ENCODE measurements at regions of chr6 and their contacts with region 1.

Region 1: GRCh38 chr6:73519926-73520687 is 725 bp downstream of the EEF1A1 start:
- DNase-seq: peak; percentile 42
- H3K4me3 ChIP-seq: peak overlapping the region; percentile 100
- CTCF ChIP-seq: no peak

Region 2: DNA sequence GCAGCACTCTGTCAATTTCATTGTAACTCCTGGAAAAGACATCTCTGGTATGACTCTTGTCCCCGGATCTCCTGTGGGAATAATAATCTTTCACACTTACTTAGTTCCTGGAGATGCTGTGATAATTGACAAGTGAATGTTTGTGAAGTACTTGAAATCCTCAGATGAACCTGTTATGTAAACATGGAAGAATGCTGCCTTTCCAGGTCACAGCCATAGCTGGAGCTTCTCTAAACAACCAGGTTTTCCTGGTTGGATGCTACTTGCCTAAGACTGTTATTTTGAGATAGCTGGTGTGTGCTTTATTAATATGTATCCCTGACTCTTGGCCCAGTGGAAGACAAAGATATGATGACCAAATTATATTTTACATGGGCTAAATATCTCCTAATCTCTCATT is 669.6 kb before region 1 on chr6:
- in situ Hi-C with region 1: no loop called
- DNase-seq: no peak
- H3K4me3 ChIP-seq: no peak overlapping the region
- CTCF ChIP-seq: no peak

Region 3: GRCh38 chr6:73566954-73567591 is 47.0 kb after region 1 on chr6:
- in situ Hi-C with region 1: loop called (anchors 5 kb)
- DNase-seq: no peak
- H3K4me3 ChIP-seq: no peak overlapping the region
- CTCF ChIP-seq: no peak

Region 4: DNA sequence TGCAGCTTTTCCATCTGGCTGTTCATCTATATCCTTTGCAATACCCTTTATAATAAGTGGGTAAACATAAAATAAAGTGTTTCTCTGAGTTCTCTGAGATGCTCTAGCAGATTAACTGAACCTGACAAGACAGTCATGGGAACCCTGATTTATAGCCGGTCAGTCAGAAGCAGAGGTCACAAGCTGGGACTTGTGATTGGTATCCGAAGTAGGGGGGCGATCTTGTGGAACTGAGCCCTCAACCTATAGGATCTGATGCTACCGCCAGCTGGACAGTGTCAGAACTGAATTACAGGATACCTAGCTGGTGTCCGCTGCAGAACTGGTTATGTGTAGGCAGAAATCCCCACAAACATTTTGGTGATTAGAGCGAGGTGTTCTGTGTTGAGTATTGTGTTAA is 94.7 kb after region 1 on chr6:
- in situ Hi-C with region 1: loop called (anchors 5 kb)
- DNase-seq: no peak
- H3K4me3 ChIP-seq: no peak overlapping the region
- CTCF ChIP-seq: no peak